Tibial artery (tissue), 4 donors: ENCODE measurements at regions of chrX and their contacts with region 1.

Region 1: DNA sequence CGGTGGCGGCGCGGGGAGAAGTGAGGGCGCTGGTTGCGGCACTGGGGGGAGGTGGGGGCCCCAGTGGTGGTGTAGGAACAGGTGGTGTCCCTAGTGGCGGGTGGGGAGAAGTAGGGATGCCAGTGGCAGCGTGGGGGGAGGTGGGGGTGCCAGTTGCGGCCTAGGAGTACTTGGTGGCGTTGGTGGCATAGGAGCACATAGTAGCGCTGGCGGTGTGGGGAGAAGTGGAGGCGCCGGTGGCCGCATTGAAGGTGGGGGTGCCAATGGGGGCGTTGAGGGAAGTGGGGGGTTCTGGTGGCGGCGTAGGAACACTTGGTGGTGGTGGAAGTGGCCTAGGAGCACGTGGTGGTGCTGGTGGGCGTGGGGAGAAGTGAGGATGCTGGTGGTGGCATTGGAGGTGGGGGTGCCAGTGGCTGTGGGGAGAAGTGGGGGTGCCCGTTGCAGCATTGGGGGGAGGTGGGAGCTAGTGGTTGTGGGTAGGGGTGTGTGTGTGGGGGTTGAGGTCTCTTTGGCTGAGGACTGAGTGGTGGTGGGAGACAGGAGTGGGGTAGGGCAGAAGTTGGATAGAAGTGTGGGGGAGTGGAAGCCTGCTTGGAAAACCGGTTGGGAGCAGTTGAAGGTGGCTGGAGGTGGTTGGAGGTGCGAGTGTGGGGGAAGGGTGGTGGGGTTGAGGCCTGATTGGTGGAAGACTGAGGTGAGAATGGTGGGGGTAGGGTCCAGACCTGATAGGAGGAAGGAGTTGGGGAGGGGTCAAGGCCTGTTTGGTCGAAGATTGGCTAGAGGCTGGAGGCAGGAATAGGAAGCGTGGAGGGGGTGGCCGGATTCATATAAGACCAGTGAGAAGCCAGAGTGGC is 1.1 kb downstream of the GCNA start:
- DNase-seq: no peak
- H3K4me3 ChIP-seq: no peak overlapping the region
- H3K27ac ChIP-seq: no peak overlapping the region
- H3K4me1 ChIP-seq: no peaks in the 10 kb centered on the region
- H3K27me3 ChIP-seq: no peaks in the 10 kb centered on the region
- CTCF ChIP-seq: no peak

Region 2: GRCh38 chrX:71068049-71068763 is 511.2 kb before region 1 on chrX and contains the start of gene SNX12:
- intact Hi-C with region 1: no loop called
- DNase-seq: peak; percentile 93 to 96
- H3K4me3 ChIP-seq: peak within 1 kb of the TSS; percentile 65 to 66
- H3K27ac ChIP-seq: peak within 1 kb of the TSS; percentile 81 to 84
- H3K4me1 ChIP-seq: peaks cover 0 to 14% (median 0%) of the 10 kb centered on the region in 4 donors
- H3K27me3 ChIP-seq: no peaks in the 10 kb centered on the region
- CTCF ChIP-seq: peak in 1 of 2 experiments; percentile 78

Region 3: DNA sequence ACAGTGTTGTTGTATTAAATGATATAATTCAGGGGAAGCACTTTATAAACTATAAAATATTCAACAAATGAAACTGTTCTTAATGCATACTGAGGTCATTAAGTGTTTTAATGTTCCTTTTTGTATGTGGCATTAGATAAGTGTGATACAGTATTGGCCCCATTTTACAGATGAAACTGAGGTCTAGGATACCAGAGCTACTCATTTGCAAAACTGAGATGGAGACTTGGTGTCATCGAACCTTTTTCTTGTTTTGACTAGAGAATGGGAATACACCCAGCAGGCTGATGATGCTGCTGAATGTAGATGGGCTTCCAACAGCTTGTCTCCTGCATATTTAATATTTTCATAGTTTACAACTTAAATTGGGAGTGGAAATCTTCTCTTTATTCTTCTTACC is 178.7 kb before region 1 on chrX:
- intact Hi-C with region 1: loop called (anchors 10 kb)
- DNase-seq: no peak
- H3K4me3 ChIP-seq: no peak overlapping the region
- H3K27ac ChIP-seq: no peak overlapping the region
- H3K4me1 ChIP-seq: no peaks in the 10 kb centered on the region
- H3K27me3 ChIP-seq: no peaks in the 10 kb centered on the region
- CTCF ChIP-seq: no peak

Region 4: GRCh38 chrX:71454222-71454621 is 125.1 kb before region 1 on chrX:
- intact Hi-C with region 1: no loop called
- DNase-seq: no peak
- H3K4me3 ChIP-seq: no peak overlapping the region
- H3K27ac ChIP-seq: no peak overlapping the region
- H3K4me1 ChIP-seq: no peaks in the 10 kb centered on the region
- H3K27me3 ChIP-seq: no peaks in the 10 kb centered on the region
- CTCF ChIP-seq: no peak

Region 5: DNA sequence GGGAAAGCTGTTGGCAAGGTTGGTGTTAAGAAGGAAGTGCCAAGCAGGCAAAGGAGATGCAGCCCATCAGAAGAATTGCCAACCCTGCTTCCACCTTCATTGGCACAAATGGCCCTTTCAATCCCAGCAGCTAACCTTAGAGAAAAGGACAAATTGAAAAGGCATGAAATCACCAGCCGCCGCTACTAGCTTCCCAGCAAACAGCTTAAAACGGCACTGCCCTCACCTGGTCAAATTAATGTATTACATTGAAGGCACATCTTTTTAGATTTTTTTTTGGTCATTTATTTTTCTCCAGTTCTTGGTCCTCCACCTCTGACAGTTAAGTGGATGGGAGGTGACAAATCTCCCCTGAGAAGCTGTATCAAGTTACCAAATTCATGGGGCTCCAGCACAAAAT is 280.3 kb after region 1 on chrX:
- intact Hi-C with region 1: no loop called
- DNase-seq: no peak
- H3K4me3 ChIP-seq: no peak overlapping the region
- H3K27ac ChIP-seq: no peak overlapping the region
- H3K4me1 ChIP-seq: no peaks in the 10 kb centered on the region
- H3K27me3 ChIP-seq: no peaks in the 10 kb centered on the region
- CTCF ChIP-seq: peak in 1 of 2 experiments; percentile 36